Caki2 (cell line): ENCODE measurements at regions of chr20 and their contacts with region 1.

Region 1: GRCh38 chr20:35174458-35175216 is 2.8 kb downstream of the PROCR start:
- DNase-seq: no peak

Region 2: GRCh38 chr20:34825530-34826362 is 348.9 kb before region 1 on chr20 and contains the start of gene NCOA6:
- in situ Hi-C with region 1: loop called (anchors 25 kb)
- DNase-seq: peak; percentile 64
- total RNA-seq, gene NCOA6: 1.6 and 2.2 TPM in 2 replicates

Region 3: GRCh38 chr20:35120012-35120701 is 54.5 kb before region 1 on chr20:
- in situ Hi-C with region 1: no loop called
- DNase-seq: no peak

Region 4: DNA sequence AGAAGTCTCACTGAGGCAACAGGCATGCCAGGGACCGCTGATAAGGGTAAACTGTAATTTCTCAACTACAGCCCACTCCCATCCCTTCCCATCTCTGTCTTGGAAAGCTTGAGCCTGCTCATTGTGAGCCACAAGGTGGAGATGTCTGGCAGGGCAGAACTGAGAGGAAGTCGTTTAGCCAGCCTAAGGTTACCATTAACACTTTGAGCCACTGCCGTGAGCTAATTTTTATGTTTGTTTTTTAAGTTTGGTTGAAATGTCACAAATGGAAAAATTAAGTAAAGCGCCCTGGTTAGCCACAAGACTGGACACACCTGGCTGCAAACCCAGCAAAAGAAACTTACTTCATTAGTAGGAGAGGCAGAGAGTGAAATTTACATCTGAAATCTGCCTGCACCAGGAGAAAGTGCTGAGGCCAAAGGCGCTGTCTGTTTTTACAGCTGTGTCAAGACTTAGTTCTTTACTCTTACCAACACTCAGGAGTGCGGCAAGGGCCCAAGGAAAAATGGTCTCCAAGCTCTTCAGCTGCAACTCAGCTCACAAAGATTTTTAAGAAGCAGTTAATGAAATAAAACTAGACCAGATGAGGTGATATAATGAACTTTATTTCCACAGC is 167.6 kb after region 1 on chr20:
- in situ Hi-C with region 1: no loop called
- DNase-seq: no peak